ENCODE measurements at regions of chr9 and their contacts with region 1.

Region 1: DNA sequence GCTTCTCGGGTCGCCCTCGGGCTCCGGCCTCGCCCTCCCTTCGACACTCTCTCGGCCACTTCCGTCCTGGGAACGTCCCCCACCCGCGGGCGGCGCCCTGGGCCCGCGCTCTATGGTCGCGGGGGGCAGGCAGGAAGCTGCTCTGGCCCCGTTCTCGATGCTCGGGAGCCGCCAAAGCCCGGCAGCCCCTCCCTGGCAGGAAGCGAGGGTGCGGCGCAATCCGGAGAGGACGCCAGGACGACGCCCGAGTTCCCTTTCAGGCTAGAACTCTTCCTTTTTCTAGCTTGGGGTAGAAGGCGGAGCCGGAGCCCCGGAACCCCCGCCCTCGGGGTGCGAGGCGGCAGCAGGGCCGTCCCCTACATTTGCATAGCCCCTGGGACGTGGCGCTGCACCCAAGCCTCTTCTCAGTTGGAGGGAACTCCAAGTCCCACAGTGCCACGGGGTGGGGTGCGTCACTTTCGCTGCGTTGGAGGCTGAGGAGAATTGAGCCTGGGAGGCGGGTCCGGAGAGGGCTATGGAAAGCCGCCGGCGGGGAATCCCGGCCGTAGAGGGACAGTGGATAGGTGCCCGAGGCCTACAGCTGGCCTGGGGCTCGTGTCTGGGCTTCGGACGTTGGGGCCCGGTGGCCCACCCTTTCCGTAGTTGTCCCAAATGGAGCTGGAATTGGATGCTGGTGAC is at the starts of genes CREB3 and TLN1:
- DNase-seq: peak; percentile 98 to 99 (median 99)
- ATAC-seq: peak; percentile 87 to 93 (median 91)
- H3K4me3 ChIP-seq: peak within 1 kb of the TSS; percentile 63 to 98 (median 86)
- H3K27ac ChIP-seq: peak within 1 kb of the TSS; percentile 94 to 99 (median 98)
- H3K4me1 ChIP-seq: peaks cover 12 to 71% (median 53%) of the 10 kb centered on the region in 12 donors
- H3K27me3 ChIP-seq: no peaks in the 10 kb centered on the region
- CTCF ChIP-seq: peak in 3 of 12 donors; percentile 6 to 28 (median 16)
- POLR2A ChIP-seq: peak in 1 of 2 donors; percentile 83
- total RNA-seq, gene CREB3: 16.1 to 38.0 (median 25.5) TPM
- total RNA-seq, gene TLN1: 193 to 373 (median 261) TPM

Region 2: DNA sequence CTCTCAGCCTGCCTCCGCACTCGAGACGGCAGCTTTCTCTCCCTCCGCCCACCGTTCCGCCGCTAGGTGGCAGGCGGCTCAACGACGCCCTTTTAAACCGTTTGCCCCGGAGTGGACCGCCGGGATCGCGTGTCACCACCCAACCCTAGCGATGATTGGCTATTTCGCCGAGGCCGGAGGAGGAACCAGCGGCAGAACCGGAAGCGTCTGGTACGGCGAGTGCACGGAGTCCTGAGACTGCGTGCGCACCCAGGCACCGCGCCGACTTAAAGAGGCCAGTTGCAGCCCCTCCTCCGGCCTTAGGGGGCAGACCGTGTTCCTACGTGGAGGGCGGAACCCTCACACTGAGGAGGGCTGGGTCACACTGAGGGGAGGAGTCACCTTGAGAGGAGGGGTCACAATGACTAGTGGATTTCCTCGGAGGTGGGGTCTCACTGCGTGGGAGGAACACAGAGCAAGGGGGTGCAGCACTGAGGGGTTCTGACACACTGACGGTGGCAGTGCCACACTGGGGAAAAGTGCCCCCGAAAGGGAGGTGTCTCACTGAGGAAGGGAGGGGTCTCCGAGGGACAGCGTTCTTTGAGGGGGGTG is 128.2 kb before region 1 on chr9:
- intact Hi-C with region 1: loop called in 1 of 10 experiments (anchors 2 kb)
- DNase-seq: peak; percentile 100
- ATAC-seq: peak; percentile 95 to 97 (median 96)
- H3K4me3 ChIP-seq: peak overlapping the region; percentile 43 to 96 (median 78)
- H3K27ac ChIP-seq: peak overlapping the region; percentile 62 to 99 (median 93)
- H3K4me1 ChIP-seq: peaks cover 6 to 33% (median 25%) of the 10 kb centered on the region in 12 donors
- H3K27me3 ChIP-seq: no peaks in the 10 kb centered on the region
- CTCF ChIP-seq: peak; percentile 90 to 99 (median 94)
- POLR2A ChIP-seq: peak in 1 of 2 donors; percentile 72

Region 3: DNA sequence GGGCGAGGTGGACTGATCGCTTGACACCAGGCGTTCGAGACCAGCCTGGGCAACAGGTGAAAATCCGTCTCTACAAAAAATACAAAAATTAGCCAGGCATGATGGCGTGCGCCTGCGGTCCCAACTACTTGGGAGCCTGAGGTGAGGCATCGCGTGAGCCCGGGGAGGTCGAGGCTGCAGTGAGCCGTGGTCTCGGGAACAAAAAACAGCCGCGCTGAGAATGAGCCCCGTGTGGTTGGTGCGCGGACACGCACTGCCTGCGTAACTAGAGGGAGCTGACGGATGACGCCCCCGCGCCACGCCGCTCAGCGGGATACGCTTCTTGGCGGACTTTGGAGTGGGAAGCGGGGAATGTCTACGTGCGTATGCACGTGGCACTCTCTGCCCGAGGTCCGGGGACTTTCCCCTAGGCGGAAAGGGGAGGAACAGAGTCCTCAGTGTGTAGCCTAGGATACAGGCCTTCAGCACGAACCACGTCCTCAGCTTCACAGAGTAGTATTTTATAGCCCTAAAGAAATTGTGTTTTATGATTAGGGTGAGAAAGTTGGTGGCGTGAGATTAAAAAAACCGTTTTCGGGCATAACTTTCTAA is 74.6 kb before region 1 on chr9 and contains the start of gene RMRP:
- intact Hi-C with region 1: loop called in 8 of 10 experiments (anchors 1 to 5 kb)
- DNase-seq: peak; percentile 98 to 99 (median 98)
- ATAC-seq: peak; percentile 94 to 97 (median 96)
- H3K4me3 ChIP-seq: peak within 1 kb of the TSS; percentile 72 to 98 (median 88)
- H3K27ac ChIP-seq: peak within 1 kb of the TSS; percentile 93 to 100 (median 97)
- H3K4me1 ChIP-seq: peaks cover 0 to 56% (median 30%) of the 10 kb centered on the region in 12 donors
- H3K27me3 ChIP-seq: no peaks in the 10 kb centered on the region
- CTCF ChIP-seq: peak in 11 of 12 donors; percentile 12 to 55 (median 32)
- POLR2A ChIP-seq: peak in 1 of 2 donors; percentile 31
- total RNA-seq, gene RMRP: 462 to 18,741 (median 5,764) TPM

Region 4: GRCh38 chr9:35690431-35691333 is 41.6 kb before region 1 on chr9:
- intact Hi-C with region 1: loop called in 8 of 10 experiments (anchors 1 to 5 kb)
- DNase-seq: peak; percentile 87 to 89 (median 89)
- ATAC-seq: peak; percentile 23 to 65 (median 60)
- H3K4me3 ChIP-seq: peak overlapping the region; percentile 61 to 93 (median 74)
- H3K27ac ChIP-seq: peak overlapping the region; percentile 88 to 98 (median 97)
- H3K4me1 ChIP-seq: peaks cover 2 to 44% (median 26%) of the 10 kb centered on the region in 12 donors
- H3K27me3 ChIP-seq: no peaks in the 10 kb centered on the region
- CTCF ChIP-seq: no peak
- POLR2A ChIP-seq: peak in 1 of 2 donors; percentile 34

Region 5: DNA sequence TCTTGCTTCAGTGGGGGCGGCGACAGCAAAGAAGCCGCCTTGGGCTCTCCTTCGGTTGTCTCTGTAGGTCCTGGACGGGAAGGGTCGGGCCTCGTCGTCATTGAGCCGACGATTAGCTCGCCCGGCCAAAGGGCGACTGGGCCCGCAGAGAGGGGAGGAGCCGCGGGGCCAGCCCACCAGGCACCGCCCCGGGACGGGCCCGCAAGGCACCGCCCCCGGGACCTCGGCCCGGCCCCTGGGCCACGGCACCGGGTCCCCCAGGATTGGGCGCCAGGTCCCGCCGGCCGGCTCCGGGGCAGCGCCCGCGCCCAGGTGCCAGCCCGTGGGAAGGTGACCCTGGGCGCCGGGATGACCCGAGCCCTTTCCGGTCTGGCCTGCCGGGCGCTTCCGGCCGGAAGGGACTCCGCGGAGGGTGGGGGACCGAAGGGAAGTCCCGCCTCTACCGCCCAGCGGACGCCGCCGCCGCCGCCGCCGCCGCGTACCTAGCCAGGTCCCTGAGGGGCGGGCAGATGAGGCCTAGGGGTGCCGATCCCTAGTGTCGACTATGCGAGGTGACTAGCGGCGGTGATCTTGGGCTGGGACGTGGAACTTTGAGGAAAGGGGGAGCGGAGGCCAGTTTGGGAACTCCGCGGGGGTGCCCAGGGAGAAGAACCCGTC is 16.7 kb after region 1 on chr9 and contains the starts of genes GBA2 and RGP1:
- intact Hi-C with region 1: loop called in 4 of 10 experiments (anchors 2 kb)
- DNase-seq: peak; percentile 88 to 94 (median 93)
- ATAC-seq: peak; percentile 81 to 94 (median 92)
- H3K4me3 ChIP-seq: peak within 1 kb of the TSS; percentile 71 to 99 (median 88)
- H3K27ac ChIP-seq: peak within 1 kb of the TSS; percentile 92 to 99 (median 97)
- H3K4me1 ChIP-seq: peaks cover 2 to 60% (median 49%) of the 10 kb centered on the region in 12 donors
- H3K27me3 ChIP-seq: no peaks in the 10 kb centered on the region
- CTCF ChIP-seq: no peak
- POLR2A ChIP-seq: peak; percentile 19 to 87
- total RNA-seq, gene GBA2: 52.1 to 93.8 (median 65.5) TPM
- total RNA-seq, gene RGP1: 25.4 to 38.8 (median 32.7) TPM

Measured in heart left ventricle (tissue), 16 donors.